Psoas muscle (tissue), 8 donors: ENCODE measurements at regions of chr16 and their contacts with region 1.

Region 1: DNA sequence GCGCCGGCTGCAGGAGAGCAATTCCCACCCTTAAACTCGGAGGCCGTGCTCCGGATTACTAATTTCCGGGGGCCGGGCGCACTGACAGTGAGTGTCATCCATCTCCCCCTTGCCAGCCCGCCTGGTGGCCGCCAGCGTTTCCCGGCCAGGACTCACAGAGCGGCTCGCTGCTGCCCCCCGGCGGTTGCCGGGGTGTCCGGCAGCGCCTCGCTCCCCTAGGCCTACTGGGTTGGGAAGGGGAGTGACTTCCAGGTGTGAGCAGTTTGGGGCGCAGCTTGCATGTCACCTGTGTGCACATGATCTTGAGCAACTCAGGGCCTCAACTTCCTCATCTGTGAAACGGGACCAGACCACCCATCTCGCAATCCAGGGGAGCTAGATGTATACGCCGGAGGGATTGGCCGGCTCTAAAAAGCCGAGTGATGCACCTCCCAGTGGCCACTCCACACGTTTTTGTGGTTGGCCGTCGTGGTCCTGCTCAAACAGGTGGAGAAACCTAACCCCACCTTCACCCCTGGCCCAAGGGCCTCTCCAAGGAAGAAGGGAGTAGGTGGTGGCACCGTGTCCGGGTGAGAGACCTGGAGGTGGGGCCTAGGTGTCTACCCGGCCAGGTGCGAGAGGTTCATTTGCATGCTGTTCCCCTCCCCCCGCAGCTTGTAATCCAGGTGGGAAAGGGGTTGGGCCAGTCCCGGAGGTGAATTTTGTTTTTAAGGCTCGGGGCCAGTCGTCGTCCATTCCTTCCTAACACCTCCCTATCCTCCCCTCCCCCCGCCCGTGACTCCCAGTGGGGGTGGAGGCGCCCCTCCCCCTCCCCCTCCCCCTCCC is 2.4 kb upstream of the GSE1 start:
- DNase-seq: peak; percentile 92 to 95
- ATAC-seq: peak; percentile 48 to 66 (median 51)
- H3K4me3 ChIP-seq: peak overlapping the region; percentile 79
- H3K27ac ChIP-seq: peak overlapping the region; percentile 99
- H3K4me1 ChIP-seq: peaks cover 47% of the 10 kb centered on the region
- H3K27me3 ChIP-seq: no peaks in the 10 kb centered on the region
- CTCF ChIP-seq: peak; percentile 99

Region 2: GRCh38 chr16:85275533-85276249 is 335.0 kb before region 1 on chr16:
- intact Hi-C with region 1: loop called (anchors 10 kb)
- DNase-seq: peak; percentile 76 to 87
- ATAC-seq: peak; percentile 77 to 88 (median 78)
- H3K4me3 ChIP-seq: no peak overlapping the region
- H3K27ac ChIP-seq: no peak overlapping the region
- H3K4me1 ChIP-seq: peaks cover 21% of the 10 kb centered on the region
- H3K27me3 ChIP-seq: no peaks in the 10 kb centered on the region
- CTCF ChIP-seq: peak; percentile 89

Region 3: GRCh38 chr16:85376292-85377095 is 234.2 kb before region 1 on chr16:
- intact Hi-C with region 1: loop called in 1 of 2 experiments (anchors 5 kb)
- DNase-seq: peak; percentile 62 to 74
- ATAC-seq: peak; percentile 68 to 76 (median 68)
- H3K4me3 ChIP-seq: peak overlapping the region; percentile 11
- H3K27ac ChIP-seq: peak overlapping the region; percentile 55
- H3K4me1 ChIP-seq: peaks cover 42% of the 10 kb centered on the region
- H3K27me3 ChIP-seq: no peaks in the 10 kb centered on the region
- CTCF ChIP-seq: no peak

Region 4: DNA sequence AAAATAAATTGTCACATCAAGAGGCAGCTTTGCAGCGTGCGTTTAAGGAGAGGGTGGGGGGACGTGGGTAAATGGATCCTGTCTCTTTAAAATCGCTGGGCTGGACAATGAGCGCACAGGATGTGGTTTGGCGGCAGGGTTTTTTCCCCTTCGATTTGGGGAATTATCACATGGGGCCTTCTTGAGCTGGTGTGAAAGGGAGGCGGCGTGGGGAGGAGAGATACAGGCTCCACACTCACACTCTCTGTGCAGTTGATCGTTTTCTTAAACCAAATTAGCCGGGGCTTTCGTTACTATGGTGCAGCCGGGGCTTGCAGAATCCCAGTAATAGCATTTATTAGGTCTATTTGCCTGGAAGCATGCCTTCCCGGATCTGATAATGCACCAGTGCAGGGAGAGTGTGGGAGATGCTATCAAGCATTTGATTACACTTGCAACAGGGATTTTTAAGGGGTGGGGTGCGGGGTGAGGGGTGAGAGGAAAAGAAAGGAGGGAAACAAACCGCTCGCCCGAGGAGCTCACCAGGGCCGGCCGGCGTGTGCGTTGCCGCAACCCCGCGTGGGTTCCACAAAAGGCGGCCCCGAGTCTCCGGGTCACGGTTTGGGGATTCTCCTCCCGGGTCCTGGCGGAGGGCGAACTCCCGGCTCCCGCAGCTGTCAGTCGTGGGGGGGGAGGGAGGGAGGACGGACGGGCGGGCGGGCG is 56.5 kb before region 1 on chr16:
- intact Hi-C with region 1: loop called in 1 of 2 experiments (anchors 2 kb)
- DNase-seq: peak; percentile 66 to 67
- ATAC-seq: peak; percentile 46 to 64 (median 49)
- H3K4me3 ChIP-seq: peak overlapping the region; percentile 79
- H3K27ac ChIP-seq: peak overlapping the region; percentile 87
- H3K4me1 ChIP-seq: peaks cover 42% of the 10 kb centered on the region
- H3K27me3 ChIP-seq: no peaks in the 10 kb centered on the region
- CTCF ChIP-seq: no peak

Region 5: GRCh38 chr16:85573696-85574641 is 36.8 kb before region 1 on chr16:
- intact Hi-C with region 1: no loop called
- DNase-seq: peak; percentile 63 to 68
- ATAC-seq: peak in 2 of 4 donors; percentile 31 to 56
- H3K4me3 ChIP-seq: peak overlapping the region; percentile 30
- H3K27ac ChIP-seq: peak overlapping the region; percentile 63
- H3K4me1 ChIP-seq: peaks cover 75% of the 10 kb centered on the region
- H3K27me3 ChIP-seq: no peaks in the 10 kb centered on the region
- CTCF ChIP-seq: no peak